ENCODE measurements at regions of chr11 and their contacts with region 1.

Region 1: GRCh38 chr11:15208378-15209222 is 93.9 kb downstream of the INSC start:
- DNase-seq: peak; percentile 52 to 79 (median 66)
- ATAC-seq: peak; percentile 81
- H3K4me3 ChIP-seq: no peak overlapping the region
- H3K4me3 Mint-ChIP-seq: no peak overlapping the region
- H3K27ac ChIP-seq: no peak overlapping the region
- H3K27ac Mint-ChIP-seq: no peak overlapping the region
- H3K4me1 ChIP-seq: peaks cover 3% of the 10 kb centered on the region
- H3K4me1 Mint-ChIP-seq: no peaks in the 10 kb centered on the region
- H3K27me3 ChIP-seq: peaks cover 0 to 5% of the 10 kb centered on the region in 2 experiments
- H3K27me3 Mint-ChIP-seq: peaks cover 5% of the 10 kb centered on the region
- CTCF ChIP-seq: peak; percentile 74

Region 2: GRCh38 chr11:14300661-14301304 is 907.8 kb before region 1 on chr11:
- CTCF ChIA-PET with region 1: no interaction called
- POLR2A ChIA-PET with region 1: no interaction called
- intact Hi-C with region 1: loop called in 1 of 2 experiments (anchors 10 kb)
- DNase-seq: peak in 13 of 14 experiments; percentile 13 to 68 (median 27)
- ATAC-seq: peak; percentile 94
- H3K4me3 ChIP-seq: no peak overlapping the region
- H3K4me3 Mint-ChIP-seq: no peak overlapping the region
- H3K27ac ChIP-seq: no peak overlapping the region
- H3K27ac Mint-ChIP-seq: no peak overlapping the region
- H3K4me1 ChIP-seq: peaks cover 5% of the 10 kb centered on the region
- H3K4me1 Mint-ChIP-seq: peaks cover 5% of the 10 kb centered on the region
- H3K27me3 ChIP-seq: no peaks in the 10 kb centered on the region
- H3K27me3 Mint-ChIP-seq: no peaks in the 10 kb centered on the region
- CTCF ChIP-seq: peak; percentile 60

Region 3: GRCh38 chr11:14315130-14315529 is 893.5 kb before region 1 on chr11:
- CTCF ChIA-PET with region 1: no interaction called
- POLR2A ChIA-PET with region 1: no interaction called
- intact Hi-C with region 1: no loop called
- DNase-seq: no peak
- ATAC-seq: no peak
- H3K4me3 ChIP-seq: no peak overlapping the region
- H3K4me3 Mint-ChIP-seq: no peak overlapping the region
- H3K27ac ChIP-seq: no peak overlapping the region
- H3K27ac Mint-ChIP-seq: no peak overlapping the region
- H3K4me1 ChIP-seq: peaks cover 15% of the 10 kb centered on the region
- H3K4me1 Mint-ChIP-seq: peaks cover 51% of the 10 kb centered on the region
- H3K27me3 ChIP-seq: no peaks in the 10 kb centered on the region
- H3K27me3 Mint-ChIP-seq: no peaks in the 10 kb centered on the region
- CTCF ChIP-seq: no peak

Region 4: DNA sequence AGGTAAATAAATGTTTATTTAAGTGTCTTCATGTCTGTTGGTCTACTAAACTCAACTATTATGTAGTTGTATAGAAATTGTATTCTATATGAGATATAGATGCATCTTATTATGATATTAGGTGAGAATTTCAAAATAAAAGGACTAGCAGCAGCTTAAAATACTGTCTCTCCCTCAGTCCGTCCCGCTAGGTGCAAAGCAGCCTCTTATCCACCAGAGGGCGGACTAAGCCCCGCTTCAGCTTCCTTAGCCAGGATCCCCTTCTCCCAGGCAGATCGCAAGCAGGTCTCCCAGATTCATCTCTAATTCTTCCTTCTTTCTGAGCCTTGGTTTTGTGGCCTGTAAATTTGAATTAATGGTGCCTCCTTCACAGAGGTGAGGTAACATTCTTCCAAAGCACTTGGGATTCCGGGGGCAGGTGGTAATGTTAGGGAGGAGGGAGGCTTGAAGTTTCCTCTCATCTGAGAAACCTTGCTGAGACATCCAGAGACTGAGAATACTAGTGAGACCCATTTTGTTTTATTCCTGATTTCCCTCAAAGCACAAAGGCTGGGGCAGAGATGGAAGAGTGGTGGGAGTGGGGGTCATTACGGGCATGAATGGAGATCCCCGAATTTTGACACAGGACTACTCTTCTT is 107.4 kb before region 1 on chr11:
- CTCF ChIA-PET with region 1: no interaction called
- POLR2A ChIA-PET with region 1: no interaction called
- intact Hi-C with region 1: loop called (anchors 1 kb)
- DNase-seq: peak; percentile 6 to 61 (median 26)
- ATAC-seq: peak; percentile 49
- H3K4me3 ChIP-seq: no peak overlapping the region
- H3K4me3 Mint-ChIP-seq: no peak overlapping the region
- H3K27ac ChIP-seq: no peak overlapping the region
- H3K27ac Mint-ChIP-seq: no peak overlapping the region
- H3K4me1 ChIP-seq: no peaks in the 10 kb centered on the region
- H3K4me1 Mint-ChIP-seq: no peaks in the 10 kb centered on the region
- H3K27me3 ChIP-seq: peaks cover 4 to 13% of the 10 kb centered on the region in 2 experiments
- H3K27me3 Mint-ChIP-seq: peaks cover 49% of the 10 kb centered on the region
- CTCF ChIP-seq: peak; percentile 75

Region 5: DNA sequence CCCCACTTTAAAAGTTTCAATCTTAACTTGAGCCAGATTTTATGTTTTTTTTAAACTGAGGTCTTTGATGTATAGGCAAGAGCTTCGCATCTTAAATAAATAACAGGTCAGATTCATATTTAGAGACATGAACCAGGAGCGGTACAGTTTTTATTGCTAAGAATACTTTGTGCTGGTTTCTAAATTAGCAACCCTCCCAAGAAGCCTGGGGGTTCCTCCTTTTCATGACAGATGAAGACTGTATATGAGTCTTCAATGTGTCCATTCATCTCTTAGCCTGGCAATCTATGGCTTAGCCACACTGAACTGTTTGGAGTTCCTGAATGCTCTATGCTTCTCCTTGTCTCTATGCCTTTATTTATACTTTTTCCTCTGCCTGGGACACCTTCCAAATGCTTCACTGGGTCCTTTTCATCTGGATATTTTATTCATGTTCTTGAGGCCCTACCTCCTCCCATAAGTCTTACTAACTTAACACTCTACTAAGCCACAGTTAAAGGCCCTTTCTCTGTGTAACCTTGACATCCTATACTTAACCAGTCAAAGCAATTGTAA is 244.7 kb after region 1 on chr11:
- CTCF ChIA-PET with region 1: no interaction called
- POLR2A ChIA-PET with region 1: no interaction called
- intact Hi-C with region 1: no loop called
- DNase-seq: no peak
- ATAC-seq: no peak
- H3K4me3 ChIP-seq: no peak overlapping the region
- H3K4me3 Mint-ChIP-seq: no peak overlapping the region
- H3K27ac ChIP-seq: no peak overlapping the region
- H3K27ac Mint-ChIP-seq: no peak overlapping the region
- H3K4me1 ChIP-seq: no peaks in the 10 kb centered on the region
- H3K4me1 Mint-ChIP-seq: no peaks in the 10 kb centered on the region
- H3K27me3 ChIP-seq: no peaks in the 10 kb centered on the region
- H3K27me3 Mint-ChIP-seq: peaks cover 6% of the 10 kb centered on the region
- CTCF ChIP-seq: no peak

Measured in CD4-positive, alpha-beta T cell (primary cell).